ENCODE measurements at regions of chr6 and their contacts with region 1.

Region 1: DNA sequence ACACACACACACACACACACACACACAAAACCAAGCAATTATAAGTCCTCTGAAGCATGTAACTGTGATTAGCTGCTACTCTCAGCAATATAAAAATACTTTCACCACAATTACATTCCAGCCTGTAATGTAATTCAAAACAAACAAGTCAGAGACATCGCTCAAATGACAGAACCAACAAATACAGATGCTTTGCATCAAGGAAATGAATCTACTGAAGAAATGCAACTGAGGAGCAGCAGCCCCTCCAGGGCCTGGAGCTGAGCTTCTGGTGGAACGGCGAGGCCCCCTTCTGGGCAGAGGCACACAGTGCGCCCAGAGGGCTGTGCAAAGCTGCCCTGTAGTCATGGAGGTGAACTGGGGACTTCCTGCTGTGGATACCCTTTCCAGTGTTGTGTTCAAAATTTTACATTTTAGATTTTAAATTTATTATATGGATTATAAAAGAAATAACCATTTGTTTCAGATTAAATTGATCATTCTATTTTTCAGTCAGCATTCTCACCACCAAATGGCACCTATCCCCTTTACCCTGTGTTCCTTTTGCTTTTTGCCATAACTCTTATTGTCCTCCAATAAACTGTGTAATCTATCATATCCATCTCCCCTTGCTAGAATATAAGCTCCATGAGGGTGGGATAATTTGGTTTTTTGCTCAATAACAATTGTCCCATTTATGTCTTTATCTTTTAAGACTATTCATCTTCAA is 23.2 kb downstream of the ADAT2 start:
- DNase-seq: peak; percentile 54
- H3K4me3 ChIP-seq: no peak overlapping the region
- H3K27ac ChIP-seq: no peak overlapping the region
- H3K4me1 ChIP-seq: no peaks in the 10 kb centered on the region
- H3K27me3 ChIP-seq: no peaks in the 10 kb centered on the region
- CTCF ChIP-seq: peak; percentile 96

Region 2: GRCh38 chr6:142474531-142475289 is 952.6 kb before region 1 on chr6:
- intact Hi-C with region 1: loop called (anchors 10 kb)
- DNase-seq: no peak
- H3K4me3 ChIP-seq: no peak overlapping the region
- H3K27ac ChIP-seq: no peak overlapping the region
- H3K4me1 ChIP-seq: no peaks in the 10 kb centered on the region
- H3K27me3 ChIP-seq: peaks cover 11% of the 10 kb centered on the region
- CTCF ChIP-seq: peak; percentile 90

Region 3: DNA sequence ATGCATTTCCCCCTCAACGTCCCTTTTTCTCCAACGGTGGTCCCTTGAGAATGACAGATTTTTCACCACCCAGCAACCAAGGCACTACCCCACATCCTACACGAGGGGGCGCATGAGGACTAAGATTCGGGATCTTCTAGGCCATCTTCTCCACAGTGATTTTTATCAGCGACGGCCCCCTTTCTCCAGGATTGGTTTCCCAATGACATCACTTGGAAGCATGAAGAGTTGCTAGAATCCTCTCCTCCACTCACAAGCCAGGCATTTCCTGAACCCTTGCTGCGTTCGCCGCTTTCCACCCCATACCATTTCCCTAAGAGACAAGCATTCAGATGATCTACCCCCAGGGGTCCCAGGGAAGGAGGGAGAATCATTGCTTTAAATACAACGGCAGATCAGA is 734.3 kb before region 1 on chr6:
- intact Hi-C with region 1: loop called (anchors 5 kb)
- DNase-seq: peak; percentile 37
- H3K4me3 ChIP-seq: no peak overlapping the region
- H3K27ac ChIP-seq: peak overlapping the region; percentile 45
- H3K4me1 ChIP-seq: peaks cover 20% of the 10 kb centered on the region
- H3K27me3 ChIP-seq: no peaks in the 10 kb centered on the region
- CTCF ChIP-seq: peak; percentile 95

Region 4: GRCh38 chr6:142935553-142936517 is 491.4 kb before region 1 on chr6:
- intact Hi-C with region 1: no loop called
- DNase-seq: no peak
- H3K4me3 ChIP-seq: no peak overlapping the region
- H3K27ac ChIP-seq: no peak overlapping the region
- H3K4me1 ChIP-seq: peaks cover 49% of the 10 kb centered on the region
- H3K27me3 ChIP-seq: no peaks in the 10 kb centered on the region
- CTCF ChIP-seq: no peak

Region 5: GRCh38 chr6:143248359-143248758 is 178.9 kb before region 1 on chr6:
- intact Hi-C with region 1: no loop called
- DNase-seq: no peak
- H3K4me3 ChIP-seq: no peak overlapping the region
- H3K27ac ChIP-seq: no peak overlapping the region
- H3K4me1 ChIP-seq: peaks cover 9% of the 10 kb centered on the region
- H3K27me3 ChIP-seq: no peaks in the 10 kb centered on the region
- CTCF ChIP-seq: no peak

Region 6: DNA sequence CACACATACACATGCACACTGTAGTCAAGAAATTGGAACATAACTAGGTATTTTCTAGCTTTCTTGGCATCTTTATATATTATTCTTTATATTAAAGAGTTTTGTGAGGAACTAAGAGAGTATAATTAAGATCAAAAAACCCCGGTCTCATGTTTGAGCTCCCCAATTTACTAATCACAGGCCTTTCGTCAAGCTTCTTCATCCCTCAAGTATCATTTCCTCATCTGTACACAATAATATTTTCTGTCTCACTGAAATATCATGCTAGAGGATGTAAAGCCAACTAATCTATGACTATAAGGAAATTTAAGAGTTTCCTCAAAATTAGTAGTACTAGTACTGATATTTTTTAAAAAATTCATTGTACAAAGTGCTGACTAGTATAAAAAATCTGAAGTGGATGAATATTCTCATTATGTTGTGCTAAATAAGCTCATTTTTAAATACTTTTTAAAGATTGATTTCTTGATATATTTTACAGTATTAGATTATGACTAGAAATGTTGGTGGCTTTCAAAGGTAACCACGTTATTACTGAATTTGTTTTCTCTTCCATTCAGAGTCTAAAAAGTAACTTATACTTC is 51.3 kb after region 1 on chr6:
- intact Hi-C with region 1: no loop called
- DNase-seq: no peak
- H3K4me3 ChIP-seq: no peak overlapping the region
- H3K27ac ChIP-seq: no peak overlapping the region
- H3K4me1 ChIP-seq: no peaks in the 10 kb centered on the region
- H3K27me3 ChIP-seq: no peaks in the 10 kb centered on the region
- CTCF ChIP-seq: no peak